GM23248 (cell line): ENCODE measurements at regions of chr17 and their contacts with region 1.

Region 1: DNA sequence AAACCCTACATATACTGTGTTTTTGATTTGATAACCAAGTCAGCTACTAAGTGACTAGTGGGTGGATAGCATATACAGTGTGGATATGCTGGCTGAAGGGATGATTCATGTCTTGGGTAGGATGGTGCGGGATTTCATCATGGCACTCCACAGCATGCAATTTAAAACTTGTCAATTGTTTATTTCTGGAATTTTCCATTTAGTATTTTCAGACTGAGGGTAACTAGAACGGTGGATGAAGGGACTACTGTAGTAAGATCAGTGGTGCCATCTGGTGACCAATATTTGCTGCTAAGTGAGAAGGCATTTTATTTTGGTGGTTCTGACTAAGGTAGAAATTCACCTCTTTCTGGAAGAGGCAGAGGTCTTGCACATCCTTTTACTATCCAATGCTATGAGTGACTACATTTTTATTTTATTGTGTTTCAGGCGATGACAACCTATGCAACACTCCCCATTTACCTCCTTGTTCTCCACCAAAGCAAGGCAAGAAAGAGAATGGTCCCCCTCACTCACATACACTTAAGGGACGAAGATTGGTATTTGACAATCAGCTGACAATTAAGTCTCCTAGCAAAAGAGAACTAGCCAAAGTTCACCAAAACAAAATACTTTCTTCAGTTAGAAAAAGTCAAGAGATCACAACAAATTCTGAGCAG is 3.1 kb downstream of the CDC6 start:
- DNase-seq: peak; percentile 96
- H3K4me3 ChIP-seq: no peak overlapping the region
- H3K27ac ChIP-seq: peak overlapping the region; percentile 49
- H3K4me1 ChIP-seq: peaks cover 7% of the 10 kb centered on the region
- H3K27me3 ChIP-seq: no peaks in the 10 kb centered on the region

Region 2: DNA sequence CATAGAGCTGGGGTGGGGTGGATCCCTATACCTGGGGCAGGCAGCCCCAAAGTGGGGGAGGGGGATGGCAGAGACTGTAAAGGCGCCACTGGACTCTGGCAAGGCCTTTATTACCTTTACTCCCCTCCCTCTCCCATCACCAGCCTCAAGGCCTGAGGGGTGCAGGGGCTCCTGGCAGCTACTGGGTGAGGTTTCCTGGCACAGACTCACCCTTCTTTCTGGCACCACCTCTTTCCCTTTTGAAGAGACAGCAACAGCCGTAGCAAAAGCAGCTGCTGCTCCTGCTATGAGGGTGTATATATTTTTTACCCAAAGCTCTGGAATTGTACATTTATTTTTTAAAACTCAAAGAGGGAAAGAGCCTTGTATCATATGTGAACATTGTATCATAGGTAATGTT is 95.9 kb before region 1 on chr17:
- in situ Hi-C with region 1: loop called (anchors 5 kb)
- DNase-seq: no peak
- H3K4me3 ChIP-seq: no peak overlapping the region
- H3K27ac ChIP-seq: no peak overlapping the region
- H3K4me1 ChIP-seq: no peaks in the 10 kb centered on the region
- H3K27me3 ChIP-seq: no peaks in the 10 kb centered on the region

Region 3: DNA sequence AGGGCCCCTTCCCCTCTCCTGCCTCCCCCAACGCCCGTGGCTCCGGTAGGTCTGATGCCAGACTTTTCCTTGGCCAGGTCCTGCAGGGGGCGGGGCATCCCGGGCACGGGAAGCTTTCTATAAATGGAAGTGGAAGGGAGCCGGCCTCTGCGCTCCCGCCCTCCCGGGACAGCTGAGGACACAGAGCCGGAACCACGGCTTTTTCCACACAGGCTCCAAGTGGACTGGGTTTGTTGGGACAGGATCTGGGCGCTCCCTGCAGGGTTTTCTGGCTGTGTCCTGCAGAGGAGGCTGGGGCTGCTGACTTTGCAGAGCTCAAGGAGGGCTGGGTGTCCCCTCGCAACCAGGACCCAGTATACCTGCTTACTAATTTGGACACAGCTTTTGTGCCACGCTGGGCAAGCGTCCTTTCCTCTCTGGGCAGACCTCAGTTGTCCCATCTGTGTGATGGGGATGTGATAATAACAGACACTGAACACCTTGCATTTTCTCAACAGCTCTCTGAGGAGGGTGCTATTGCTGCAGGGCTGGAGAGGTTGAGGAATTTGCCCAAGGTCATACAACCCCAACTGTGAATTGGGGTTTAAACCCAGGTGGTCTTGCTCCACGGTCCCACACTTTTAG is 208.9 kb after region 1 on chr17:
- in situ Hi-C with region 1: no loop called
- DNase-seq: peak; percentile 87
- H3K4me3 ChIP-seq: no peak overlapping the region
- H3K27ac ChIP-seq: peak overlapping the region; percentile 47
- H3K4me1 ChIP-seq: peaks cover 28% of the 10 kb centered on the region
- H3K27me3 ChIP-seq: no peaks in the 10 kb centered on the region